Vagina (tissue), 2 donors: ENCODE measurements at regions of chr18 and their contacts with region 1.

Region 1: GRCh38 chr18:24014062-24014985 is at the start of gene TTC39C:
- DNase-seq: no peak
- H3K4me3 ChIP-seq: peak within 1 kb of the TSS; percentile 75 to 85
- H3K27ac ChIP-seq: peak within 1 kb of the TSS; percentile 92
- H3K4me1 ChIP-seq: peaks cover 27% of the 10 kb centered on the region
- H3K27me3 ChIP-seq: no peaks in the 10 kb centered on the region
- CTCF ChIP-seq: no peak
- POLR2A ChIP-seq: peak in 1 of 2 donors; percentile 6
- total RNA-seq, gene TTC39C: 42.5 TPM

Region 2: GRCh38 chr18:23828426-23828825 is 185.9 kb before region 1 on chr18:
- intact Hi-C with region 1: loop called (anchors 5 kb)
- DNase-seq: peak in 1 of 2 donors; percentile 44
- H3K4me3 ChIP-seq: no peak overlapping the region
- H3K27ac ChIP-seq: peak overlapping the region; percentile 15
- H3K4me1 ChIP-seq: peaks cover 31% of the 10 kb centered on the region
- H3K27me3 ChIP-seq: no peaks in the 10 kb centered on the region
- CTCF ChIP-seq: no peak
- POLR2A ChIP-seq: no peak

Region 3: GRCh38 chr18:23938043-23938756 is 76.1 kb before region 1 on chr18:
- intact Hi-C with region 1: loop called (anchors 10 kb)
- DNase-seq: peak in 1 of 2 donors; percentile 70
- H3K4me3 ChIP-seq: no peak overlapping the region
- H3K27ac ChIP-seq: no peak overlapping the region
- H3K4me1 ChIP-seq: no peaks in the 10 kb centered on the region
- H3K27me3 ChIP-seq: no peaks in the 10 kb centered on the region
- CTCF ChIP-seq: no peak
- POLR2A ChIP-seq: no peak

Region 4: DNA sequence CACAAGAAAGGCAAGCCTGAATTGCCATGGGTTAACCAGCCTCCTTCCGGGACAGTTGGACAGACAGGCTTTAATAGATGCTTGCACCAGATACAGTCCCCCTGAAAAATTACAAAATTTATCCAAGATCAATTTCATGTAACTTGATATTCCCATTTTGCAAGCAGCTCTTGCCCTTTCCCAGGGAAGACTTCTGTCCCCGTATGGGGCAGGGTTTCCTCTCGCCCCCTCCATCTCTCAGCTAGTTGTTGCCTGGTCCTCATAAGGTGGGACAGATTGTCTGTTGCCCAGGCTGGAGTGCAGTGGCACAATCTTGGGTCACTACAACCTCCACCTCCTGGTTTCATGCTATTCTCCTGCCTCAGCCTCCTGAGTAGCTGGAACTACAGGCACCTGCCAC is 61.4 kb after region 1 on chr18:
- intact Hi-C with region 1: loop called (anchors 10 kb)
- DNase-seq: no peak
- H3K4me3 ChIP-seq: no peak overlapping the region
- H3K27ac ChIP-seq: peak overlapping the region; percentile 66
- H3K4me1 ChIP-seq: peaks cover 11% of the 10 kb centered on the region
- H3K27me3 ChIP-seq: no peaks in the 10 kb centered on the region
- CTCF ChIP-seq: no peak
- POLR2A ChIP-seq: no peak